ENCODE measurements at regions of chr11 and their contacts with region 1.

Region 1: DNA sequence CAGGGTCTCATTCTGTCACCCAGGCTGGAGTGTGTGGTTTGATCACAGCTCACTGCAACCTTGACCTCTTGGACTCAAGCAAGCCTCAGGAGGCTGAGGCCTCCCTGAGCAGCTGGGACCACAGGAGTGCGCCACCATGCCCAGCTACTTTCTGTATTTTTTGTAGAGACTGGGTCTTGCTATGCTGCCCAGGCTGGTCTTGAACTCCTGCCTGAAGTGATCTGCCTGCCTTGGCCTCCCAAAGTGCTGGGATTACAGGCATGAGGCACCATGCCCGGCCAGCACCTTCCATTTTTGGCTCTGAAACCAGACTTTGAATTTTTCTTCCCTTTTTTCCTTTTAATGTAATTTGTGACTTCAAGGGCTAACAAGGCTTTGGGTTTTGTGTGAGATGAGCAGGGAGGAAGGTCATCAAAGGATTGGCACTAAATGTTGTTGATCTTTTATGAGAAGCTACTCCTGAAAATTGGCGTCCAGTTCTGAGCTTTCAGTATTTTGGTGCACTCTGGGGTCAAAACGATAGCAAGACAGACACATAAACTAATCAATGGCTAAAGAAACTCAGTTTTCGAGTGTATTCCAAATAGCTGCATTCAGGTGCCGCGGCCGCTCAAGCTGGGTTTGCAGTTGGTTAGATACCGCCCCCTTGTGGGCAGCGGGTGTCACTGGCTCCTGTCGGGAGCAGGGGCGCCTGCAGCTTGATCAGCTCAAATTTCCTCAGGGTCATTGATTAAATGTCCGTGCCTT is 51.9 kb upstream of the CLMP start:
- DNase-seq: peak; percentile 86 to 93
- H3K4me3 ChIP-seq: no peak overlapping the region
- H3K4me3 Mint-ChIP-seq: no peak overlapping the region
- H3K27ac Mint-ChIP-seq: no peak overlapping the region
- H3K4me1 ChIP-seq: no peaks in the 10 kb centered on the region
- H3K4me1 Mint-ChIP-seq: no peaks in the 10 kb centered on the region
- H3K27me3 ChIP-seq: no peaks in the 10 kb centered on the region
- H3K27me3 Mint-ChIP-seq: peaks cover 15% of the 10 kb centered on the region
- CTCF ChIP-seq: peak; percentile 99 to 100

Region 2: GRCh38 chr11:123062158-123062891 is 184.6 kb before region 1 on chr11:
- CTCF ChIA-PET with region 1: interaction called, 4 read pairs
- POLR2A ChIA-PET with region 1: interaction called, 7 read pairs
- intact Hi-C with region 1: loop called (anchors 1 kb)
- DNase-seq: peak; percentile 100
- H3K4me3 ChIP-seq: peak overlapping the region; percentile 85
- H3K4me3 Mint-ChIP-seq: peak overlapping the region; percentile 84
- H3K27ac Mint-ChIP-seq: peak overlapping the region; percentile 98
- H3K4me1 ChIP-seq: peaks cover 26% of the 10 kb centered on the region
- H3K4me1 Mint-ChIP-seq: peaks cover 31% of the 10 kb centered on the region
- H3K27me3 ChIP-seq: no peaks in the 10 kb centered on the region
- H3K27me3 Mint-ChIP-seq: no peaks in the 10 kb centered on the region
- CTCF ChIP-seq: no peak

Region 3: GRCh38 chr11:123110356-123110755 is 136.6 kb before region 1 on chr11:
- CTCF ChIA-PET with region 1: interaction called, 98 read pairs
- POLR2A ChIA-PET with region 1: no interaction called
- intact Hi-C with region 1: loop called (anchors 1 kb)
- DNase-seq: no peak
- H3K4me3 ChIP-seq: no peak overlapping the region
- H3K4me3 Mint-ChIP-seq: no peak overlapping the region
- H3K27ac Mint-ChIP-seq: no peak overlapping the region
- H3K4me1 ChIP-seq: peaks cover 13% of the 10 kb centered on the region
- H3K4me1 Mint-ChIP-seq: peaks cover 13% of the 10 kb centered on the region
- H3K27me3 ChIP-seq: no peaks in the 10 kb centered on the region
- H3K27me3 Mint-ChIP-seq: no peaks in the 10 kb centered on the region
- CTCF ChIP-seq: no peak

Region 4: GRCh38 chr11:123174196-123175183 is 72.4 kb before region 1 on chr11:
- CTCF ChIA-PET with region 1: interaction called, 11 read pairs
- POLR2A ChIA-PET with region 1: no interaction called
- intact Hi-C with region 1: no loop called
- DNase-seq: peak; percentile 69 to 78
- H3K4me3 ChIP-seq: no peak overlapping the region
- H3K4me3 Mint-ChIP-seq: no peak overlapping the region
- H3K27ac Mint-ChIP-seq: peak overlapping the region; percentile 91
- H3K4me1 ChIP-seq: peaks cover 18% of the 10 kb centered on the region
- H3K4me1 Mint-ChIP-seq: peaks cover 13% of the 10 kb centered on the region
- H3K27me3 ChIP-seq: no peaks in the 10 kb centered on the region
- H3K27me3 Mint-ChIP-seq: no peaks in the 10 kb centered on the region
- CTCF ChIP-seq: no peak

Region 5: GRCh38 chr11:123231256-123231655 is 15.7 kb before region 1 on chr11:
- CTCF ChIA-PET with region 1: interaction called, 20 read pairs
- POLR2A ChIA-PET with region 1: no interaction called
- intact Hi-C with region 1: loop called (anchors 1 kb)
- DNase-seq: peak; percentile 83 to 90
- H3K4me3 ChIP-seq: no peak overlapping the region
- H3K4me3 Mint-ChIP-seq: peak overlapping the region; percentile 6
- H3K27ac Mint-ChIP-seq: peak overlapping the region; percentile 81
- H3K4me1 ChIP-seq: peaks cover 55% of the 10 kb centered on the region
- H3K4me1 Mint-ChIP-seq: peaks cover 24% of the 10 kb centered on the region
- H3K27me3 ChIP-seq: no peaks in the 10 kb centered on the region
- H3K27me3 Mint-ChIP-seq: no peaks in the 10 kb centered on the region
- CTCF ChIP-seq: no peak

Measured in Caco-2 (cell line).